ENCODE measurements at regions of chr6 and their contacts with region 1.

Region 1: DNA sequence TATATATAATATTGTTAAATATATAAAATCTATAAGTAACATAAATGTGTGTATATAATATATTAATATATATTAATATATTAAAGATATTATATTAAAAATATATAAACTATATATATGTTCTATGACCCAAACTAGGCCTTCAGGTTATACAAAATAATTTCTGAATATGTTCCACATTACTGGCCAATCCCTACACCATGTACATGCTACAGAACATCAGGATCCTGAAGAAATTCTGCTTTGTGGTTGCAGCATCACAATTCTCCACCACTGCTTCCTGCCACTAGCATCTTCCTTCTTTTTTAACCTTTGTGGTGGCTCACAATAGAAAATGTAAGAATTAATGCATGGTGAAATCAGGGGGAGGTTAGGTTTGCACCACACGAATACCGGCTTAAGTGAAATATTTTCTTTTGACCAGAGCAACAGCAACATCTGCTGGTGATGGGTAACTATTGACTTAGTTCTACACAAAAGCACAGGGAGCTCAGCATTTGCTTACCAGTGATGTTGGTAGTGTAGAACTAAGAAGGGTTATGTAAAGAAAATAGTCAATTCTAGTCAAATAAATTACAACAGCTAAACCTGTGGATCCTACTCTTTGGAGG is 280.6 kb downstream of the SYNE1 start:
- DNase-seq: peak; percentile 54
- H3K4me3 ChIP-seq: no peak overlapping the region
- H3K27ac ChIP-seq: no peak overlapping the region
- H3K4me1 ChIP-seq: no peaks in the 10 kb centered on the region
- H3K27me3 ChIP-seq: no peaks in the 10 kb centered on the region
- CTCF ChIP-seq: peak in 1 of 2 donors; percentile 29
- POLR2A ChIP-seq: no peak

Region 2: GRCh38 chr6:152206072-152206818 is 150.3 kb before region 1 on chr6:
- CTCF ChIA-PET with region 1: interaction called, 10 read pairs
- POLR2A ChIA-PET with region 1: no interaction called
- dilution Hi-C with region 1: no loop called
- intact Hi-C with region 1: no loop called
- DNase-seq: peak; percentile 37
- H3K4me3 ChIP-seq: no peak overlapping the region
- H3K27ac ChIP-seq: no peak overlapping the region
- H3K4me1 ChIP-seq: no peaks in the 10 kb centered on the region
- H3K27me3 ChIP-seq: no peaks in the 10 kb centered on the region
- CTCF ChIP-seq: peak; percentile 17 to 48
- POLR2A ChIP-seq: no peak

Region 3: DNA sequence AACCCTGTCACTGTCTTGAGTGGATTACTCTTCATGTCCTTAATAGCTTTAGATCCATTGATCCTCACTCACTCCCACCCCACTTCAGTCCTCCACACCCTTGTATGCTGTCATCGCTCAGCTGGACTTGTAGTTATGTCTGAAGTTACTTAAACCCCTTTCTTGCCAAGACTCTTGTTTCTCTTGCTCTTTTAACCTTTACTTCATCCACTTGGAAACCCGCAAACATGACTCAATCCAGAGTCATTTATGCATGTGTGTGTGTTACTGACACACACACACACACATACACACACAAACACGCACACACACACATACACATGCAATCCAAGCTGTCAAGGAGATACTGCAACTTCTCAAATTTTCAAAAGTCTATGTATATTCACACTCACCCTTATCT is 61.2 kb before region 1 on chr6:
- CTCF ChIA-PET with region 1: interaction called, 10 read pairs
- POLR2A ChIA-PET with region 1: no interaction called
- dilution Hi-C with region 1: no loop called
- intact Hi-C with region 1: no loop called
- DNase-seq: no peak
- H3K4me3 ChIP-seq: no peak overlapping the region
- H3K27ac ChIP-seq: no peak overlapping the region
- H3K4me1 ChIP-seq: no peaks in the 10 kb centered on the region
- H3K27me3 ChIP-seq: no peaks in the 10 kb centered on the region
- CTCF ChIP-seq: no peak
- POLR2A ChIP-seq: no peak

Region 4: GRCh38 chr6:152905551-152906299 is 549.2 kb after region 1 on chr6:
- CTCF ChIA-PET with region 1: no interaction called
- POLR2A ChIA-PET with region 1: no interaction called
- dilution Hi-C with region 1: no loop called
- intact Hi-C with region 1: no loop called
- DNase-seq: peak; percentile 93
- H3K4me3 ChIP-seq: no peak overlapping the region
- H3K27ac ChIP-seq: no peak overlapping the region
- H3K4me1 ChIP-seq: peaks cover 11% of the 10 kb centered on the region
- H3K27me3 ChIP-seq: no peaks in the 10 kb centered on the region
- CTCF ChIP-seq: no peak
- POLR2A ChIP-seq: peak; percentile 20